Right cardiac atrium (tissue), 5 donors: ENCODE measurements at regions of chr13 and their contacts with region 1.

Region 1: DNA sequence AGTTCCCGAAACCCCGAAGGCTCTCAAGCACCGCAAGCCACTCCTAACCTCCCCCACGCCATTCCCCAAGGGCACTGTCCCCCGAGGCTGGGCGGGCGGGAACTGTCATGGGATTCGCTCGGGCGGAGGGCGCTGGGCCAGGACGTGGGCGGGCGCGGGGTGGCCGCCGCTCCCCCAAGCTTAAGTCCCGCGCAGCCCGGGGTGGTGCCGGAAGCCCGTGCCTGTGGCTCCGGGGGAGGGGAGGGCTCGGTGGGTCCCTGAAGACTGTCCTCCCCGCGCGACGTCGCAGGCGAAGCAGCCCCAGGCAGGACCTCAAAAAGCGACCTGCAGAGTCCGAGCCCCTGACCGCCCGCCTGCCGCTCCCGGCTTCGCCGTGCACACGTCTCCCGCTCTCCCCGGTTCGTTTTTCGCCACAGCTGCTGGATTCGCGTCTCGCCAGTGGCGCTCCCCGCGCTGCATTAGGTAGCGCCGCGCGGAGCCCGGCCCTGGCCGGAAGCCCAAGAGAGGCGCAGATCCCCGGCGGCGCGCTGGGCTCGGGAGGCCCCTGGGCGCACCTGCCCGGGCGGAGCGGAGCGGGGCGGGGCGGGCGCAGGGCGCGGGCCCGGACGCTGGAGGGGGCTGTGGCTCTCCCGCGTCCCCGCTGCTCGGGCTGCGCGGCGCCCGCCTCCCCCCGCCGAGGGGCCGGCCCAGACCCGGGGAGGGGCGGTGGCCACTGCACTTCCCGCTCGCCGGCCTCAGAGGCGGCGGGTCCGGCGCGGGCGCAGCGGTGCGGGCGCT is at the start of gene FARP1:
- DNase-seq: peak; percentile 71 to 92 (median 91)
- ATAC-seq: peak; percentile 93 to 96
- H3K4me3 ChIP-seq: peak within 1 kb of the TSS; percentile 99
- H3K27ac ChIP-seq: peak within 1 kb of the TSS; percentile 49
- H3K4me1 ChIP-seq: no peaks in the 10 kb centered on the region
- H3K27me3 ChIP-seq: no peaks in the 10 kb centered on the region
- total RNA-seq, gene FARP1: 18.2 to 27.6 (median 23.6) TPM

Region 2: GRCh38 chr13:97695684-97696083 is 446.9 kb before region 1 on chr13:
- intact Hi-C with region 1: no loop called
- DNase-seq: no peak
- ATAC-seq: no peak
- H3K4me3 ChIP-seq: no peak overlapping the region
- H3K27ac ChIP-seq: no peak overlapping the region
- H3K4me1 ChIP-seq: no peaks in the 10 kb centered on the region
- H3K27me3 ChIP-seq: no peaks in the 10 kb centered on the region

Region 3: GRCh38 chr13:98397221-98397620 is 254.7 kb after region 1 on chr13:
- intact Hi-C with region 1: loop called in 1 of 4 experiments (anchors 10 kb)
- DNase-seq: no peak
- ATAC-seq: peak in 1 of 2 donors; percentile 60
- H3K4me3 ChIP-seq: no peak overlapping the region
- H3K27ac ChIP-seq: no peak overlapping the region
- H3K4me1 ChIP-seq: no peaks in the 10 kb centered on the region
- H3K27me3 ChIP-seq: no peaks in the 10 kb centered on the region

Region 4: GRCh38 chr13:98672944-98673545 is 530.5 kb after region 1 on chr13:
- intact Hi-C with region 1: loop called in 1 of 4 experiments (anchors 10 kb)
- DNase-seq: peak; percentile 75 to 85 (median 83)
- ATAC-seq: peak; percentile 90 to 95
- H3K4me3 ChIP-seq: no peak overlapping the region
- H3K27ac ChIP-seq: no peak overlapping the region
- H3K4me1 ChIP-seq: peaks cover 2% of the 10 kb centered on the region
- H3K27me3 ChIP-seq: no peaks in the 10 kb centered on the region